CD8-positive, alpha-beta T cell (primary cell): ENCODE measurements at regions of chr13 and their contacts with region 1.

Region 1: GRCh38 chr13:95676762-95677563 is at the start of gene DNAJC3:
- DNase-seq: peak; percentile 94 to 99 (median 98)
- ATAC-seq: peak; percentile 94
- H3K4me3 ChIP-seq: peak within 1 kb of the TSS; percentile 81 to 88
- H3K4me3 Mint-ChIP-seq: peak within 1 kb of the TSS; percentile 94
- H3K27ac ChIP-seq: peak within 1 kb of the TSS; percentile 73 to 76
- H3K27ac Mint-ChIP-seq: peak within 1 kb of the TSS; percentile 94
- H3K4me1 ChIP-seq: peaks cover 30% of the 10 kb centered on the region
- H3K4me1 Mint-ChIP-seq: peaks cover 65% of the 10 kb centered on the region
- H3K27me3 ChIP-seq: no peaks in the 10 kb centered on the region
- H3K27me3 Mint-ChIP-seq: no peaks in the 10 kb centered on the region
- CTCF ChIP-seq: no peak
- total RNA-seq, gene DNAJC3: 26.2 to 28.5 TPM

Region 2: DNA sequence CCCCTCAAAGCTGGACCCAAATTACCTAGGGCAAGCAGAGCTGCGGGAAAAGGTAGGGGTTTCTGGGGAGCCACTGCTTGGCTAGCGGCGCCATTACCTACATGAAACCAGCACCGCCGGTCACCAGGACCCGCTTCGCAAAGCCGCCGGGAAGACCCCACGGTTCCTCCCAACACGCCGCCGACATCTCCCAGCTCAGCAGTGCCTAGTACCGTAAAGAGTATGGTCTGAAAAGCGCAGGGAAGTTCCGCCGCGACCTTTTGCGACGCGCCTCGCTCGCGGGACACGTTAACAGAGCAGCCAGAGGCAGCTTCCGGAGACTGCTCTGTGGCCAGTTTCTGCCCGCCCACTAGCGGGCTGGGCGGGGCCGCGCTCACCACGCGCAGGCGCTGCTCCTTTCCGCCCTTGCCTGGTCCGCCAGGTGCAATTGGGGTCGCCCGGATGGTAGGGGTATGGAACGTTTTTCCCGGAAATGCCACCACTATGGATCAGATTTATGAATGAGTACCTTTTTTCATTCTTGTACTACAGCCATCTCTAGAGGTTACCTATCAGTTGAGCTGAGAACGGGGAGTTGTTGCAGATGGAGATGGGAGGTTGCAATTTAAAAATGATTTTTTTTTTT is 1080.9 kb before region 1 on chr13 and contains the start of gene TGDS:
- CTCF ChIA-PET with region 1: no interaction called
- POLR2A ChIA-PET with region 1: no interaction called
- intact Hi-C with region 1: loop called (anchors 2 kb)
- DNase-seq: peak; percentile 74 to 96 (median 87)
- ATAC-seq: peak; percentile 97
- H3K4me3 ChIP-seq: peak within 1 kb of the TSS; percentile 94 to 97
- H3K4me3 Mint-ChIP-seq: peak within 1 kb of the TSS; percentile 88
- H3K27ac ChIP-seq: peak within 1 kb of the TSS; percentile 77 to 83
- H3K27ac Mint-ChIP-seq: peak within 1 kb of the TSS; percentile 94
- H3K4me1 ChIP-seq: peaks cover 24% of the 10 kb centered on the region
- H3K4me1 Mint-ChIP-seq: peaks cover 42% of the 10 kb centered on the region
- H3K27me3 ChIP-seq: no peaks in the 10 kb centered on the region
- H3K27me3 Mint-ChIP-seq: no peaks in the 10 kb centered on the region
- CTCF ChIP-seq: no peak
- total RNA-seq, gene TGDS: 4.5 to 4.6 TPM

Region 3: DNA sequence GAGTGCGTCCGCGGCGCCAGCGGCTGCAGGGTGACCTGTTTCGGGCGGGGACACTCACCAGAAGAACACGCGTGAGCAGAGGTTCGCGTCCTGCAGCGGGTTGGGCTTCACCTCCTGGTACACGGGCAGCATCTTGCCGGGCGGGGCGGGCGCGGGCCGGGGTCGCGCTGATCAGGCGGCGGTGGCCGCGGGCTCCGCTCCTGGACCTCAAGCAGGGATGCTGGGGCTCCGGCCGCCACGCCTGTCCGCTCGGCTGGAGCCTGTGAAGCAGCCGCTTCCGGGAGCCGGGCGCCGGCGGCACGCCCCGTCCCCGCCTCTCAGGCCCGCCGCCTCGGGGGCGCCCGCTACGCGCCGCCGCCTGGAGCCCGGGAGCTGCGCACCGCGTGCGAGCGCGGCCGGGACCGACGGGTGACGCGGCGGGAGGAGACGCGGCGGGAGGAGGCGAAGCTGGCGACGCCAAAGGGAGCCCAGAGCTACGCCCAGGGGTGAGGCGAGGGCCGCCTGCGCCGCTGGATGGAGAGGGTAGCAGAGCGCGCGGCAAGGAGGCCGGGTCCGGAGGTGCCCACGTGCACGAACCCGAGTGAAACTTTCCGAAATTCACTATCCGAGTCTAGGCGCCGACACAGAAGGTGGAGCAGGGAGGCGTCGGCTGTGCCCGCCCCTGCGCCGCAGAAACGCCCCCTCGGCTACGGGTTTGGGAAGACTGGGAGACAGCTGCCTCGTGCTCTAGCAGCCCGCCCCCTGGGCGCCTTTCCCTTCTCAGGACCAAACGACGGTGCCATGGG is 375.6 kb before region 1 on chr13 and contains the start of gene ABCC4:
- CTCF ChIA-PET with region 1: no interaction called
- POLR2A ChIA-PET with region 1: no interaction called
- intact Hi-C with region 1: loop called in 1 of 2 experiments (anchors 10 kb)
- DNase-seq: peak in 8 of 9 experiments; percentile 33 to 75 (median 50)
- ATAC-seq: peak; percentile 77
- H3K4me3 ChIP-seq: peak within 1 kb of the TSS; percentile 74 to 79
- H3K4me3 Mint-ChIP-seq: peak within 1 kb of the TSS; percentile 82
- H3K27ac ChIP-seq: no peak within 1 kb of the TSS
- H3K27ac Mint-ChIP-seq: peak within 1 kb of the TSS; percentile 12
- H3K4me1 ChIP-seq: peaks cover 8% of the 10 kb centered on the region
- H3K4me1 Mint-ChIP-seq: peaks cover 24% of the 10 kb centered on the region
- H3K27me3 ChIP-seq: no peaks in the 10 kb centered on the region
- H3K27me3 Mint-ChIP-seq: no peaks in the 10 kb centered on the region
- CTCF ChIP-seq: no peak
- total RNA-seq, gene ABCC4: 3.3 to 3.4 TPM

Region 4: GRCh38 chr13:95723438-95723837 is 46.5 kb after region 1 on chr13:
- CTCF ChIA-PET with region 1: no interaction called
- POLR2A ChIA-PET with region 1: no interaction called
- intact Hi-C with region 1: loop called in 1 of 2 experiments (anchors 5 kb)
- DNase-seq: no peak
- ATAC-seq: no peak
- H3K4me3 ChIP-seq: no peak overlapping the region
- H3K4me3 Mint-ChIP-seq: no peak overlapping the region
- H3K27ac ChIP-seq: no peak overlapping the region
- H3K27ac Mint-ChIP-seq: peak overlapping the region; percentile 19
- H3K4me1 ChIP-seq: no peaks in the 10 kb centered on the region
- H3K4me1 Mint-ChIP-seq: peaks cover 30% of the 10 kb centered on the region
- H3K27me3 ChIP-seq: no peaks in the 10 kb centered on the region
- H3K27me3 Mint-ChIP-seq: no peaks in the 10 kb centered on the region
- CTCF ChIP-seq: no peak

Region 5: GRCh38 chr13:95784900-95785290 is 107.9 kb after region 1 on chr13:
- CTCF ChIA-PET with region 1: no interaction called
- POLR2A ChIA-PET with region 1: no interaction called
- intact Hi-C with region 1: loop called in 1 of 2 experiments (anchors 5 kb)
- DNase-seq: no peak
- ATAC-seq: no peak
- H3K4me3 ChIP-seq: no peak overlapping the region
- H3K4me3 Mint-ChIP-seq: no peak overlapping the region
- H3K27ac ChIP-seq: no peak overlapping the region
- H3K27ac Mint-ChIP-seq: no peak overlapping the region
- H3K4me1 ChIP-seq: no peaks in the 10 kb centered on the region
- H3K4me1 Mint-ChIP-seq: no peaks in the 10 kb centered on the region
- H3K27me3 ChIP-seq: no peaks in the 10 kb centered on the region
- H3K27me3 Mint-ChIP-seq: no peaks in the 10 kb centered on the region
- CTCF ChIP-seq: no peak

Region 6: DNA sequence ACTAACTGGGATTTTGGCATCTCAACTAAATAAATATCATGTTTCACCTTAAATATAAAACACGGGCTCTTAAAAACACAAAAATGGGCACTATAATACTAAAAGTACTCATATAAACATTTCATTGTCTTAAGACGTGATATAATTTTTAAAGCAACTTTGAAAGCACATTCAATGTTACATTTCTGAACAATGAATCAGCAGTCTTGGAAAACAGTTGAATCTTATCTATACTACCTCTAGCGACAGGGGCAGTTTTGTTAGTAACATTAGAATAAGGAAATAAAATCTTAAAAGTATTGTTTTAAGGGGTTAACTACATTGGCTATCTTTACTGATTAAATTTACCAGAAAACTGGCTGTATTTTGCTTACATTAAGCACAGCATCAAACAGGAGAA is 219.3 kb after region 1 on chr13:
- CTCF ChIA-PET with region 1: no interaction called
- POLR2A ChIA-PET with region 1: no interaction called
- intact Hi-C with region 1: no loop called
- DNase-seq: no peak
- ATAC-seq: no peak
- H3K4me3 ChIP-seq: no peak overlapping the region
- H3K4me3 Mint-ChIP-seq: no peak overlapping the region
- H3K27ac ChIP-seq: no peak overlapping the region
- H3K27ac Mint-ChIP-seq: no peak overlapping the region
- H3K4me1 ChIP-seq: no peaks in the 10 kb centered on the region
- H3K4me1 Mint-ChIP-seq: no peaks in the 10 kb centered on the region
- H3K27me3 ChIP-seq: no peaks in the 10 kb centered on the region
- H3K27me3 Mint-ChIP-seq: peaks cover 6% of the 10 kb centered on the region
- CTCF ChIP-seq: no peak

Region 7: GRCh38 chr13:95948656-95949055 is 271.7 kb after region 1 on chr13:
- CTCF ChIA-PET with region 1: no interaction called
- POLR2A ChIA-PET with region 1: no interaction called
- intact Hi-C with region 1: no loop called
- DNase-seq: no peak
- ATAC-seq: no peak
- H3K4me3 ChIP-seq: no peak overlapping the region
- H3K4me3 Mint-ChIP-seq: no peak overlapping the region
- H3K27ac ChIP-seq: no peak overlapping the region
- H3K27ac Mint-ChIP-seq: no peak overlapping the region
- H3K4me1 ChIP-seq: no peaks in the 10 kb centered on the region
- H3K4me1 Mint-ChIP-seq: no peaks in the 10 kb centered on the region
- H3K27me3 ChIP-seq: no peaks in the 10 kb centered on the region
- H3K27me3 Mint-ChIP-seq: no peaks in the 10 kb centered on the region
- CTCF ChIP-seq: no peak